Naive thymus-derived CD4-positive, alpha-beta T cell (primary cell): ENCODE measurements at regions of chr3 and their contacts with region 1.

Region 1: GRCh38 chr3:188389711-188390342 is 235.9 kb downstream of the LPP start:
- DNase-seq: peak in 7 of 9 donors; percentile 13 to 45 (median 34)
- ATAC-seq: peak; percentile 91
- H3K4me3 ChIP-seq: no peak overlapping the region
- H3K4me3 Mint-ChIP-seq: peak overlapping the region in 8 of 10 donors; percentile 5 to 70 (median 17)
- H3K27ac ChIP-seq: no peak overlapping the region
- H3K27ac Mint-ChIP-seq: peak overlapping the region in 8 of 9 donors; percentile 4 to 74 (median 60)
- H3K4me1 ChIP-seq: no peaks in the 10 kb centered on the region
- H3K4me1 Mint-ChIP-seq: peaks cover 18 to 32% (median 26%) of the 10 kb centered on the region in 7 donors
- H3K27me3 ChIP-seq: no peaks in the 10 kb centered on the region
- H3K27me3 Mint-ChIP-seq: no peaks in the 10 kb centered on the region

Region 2: DNA sequence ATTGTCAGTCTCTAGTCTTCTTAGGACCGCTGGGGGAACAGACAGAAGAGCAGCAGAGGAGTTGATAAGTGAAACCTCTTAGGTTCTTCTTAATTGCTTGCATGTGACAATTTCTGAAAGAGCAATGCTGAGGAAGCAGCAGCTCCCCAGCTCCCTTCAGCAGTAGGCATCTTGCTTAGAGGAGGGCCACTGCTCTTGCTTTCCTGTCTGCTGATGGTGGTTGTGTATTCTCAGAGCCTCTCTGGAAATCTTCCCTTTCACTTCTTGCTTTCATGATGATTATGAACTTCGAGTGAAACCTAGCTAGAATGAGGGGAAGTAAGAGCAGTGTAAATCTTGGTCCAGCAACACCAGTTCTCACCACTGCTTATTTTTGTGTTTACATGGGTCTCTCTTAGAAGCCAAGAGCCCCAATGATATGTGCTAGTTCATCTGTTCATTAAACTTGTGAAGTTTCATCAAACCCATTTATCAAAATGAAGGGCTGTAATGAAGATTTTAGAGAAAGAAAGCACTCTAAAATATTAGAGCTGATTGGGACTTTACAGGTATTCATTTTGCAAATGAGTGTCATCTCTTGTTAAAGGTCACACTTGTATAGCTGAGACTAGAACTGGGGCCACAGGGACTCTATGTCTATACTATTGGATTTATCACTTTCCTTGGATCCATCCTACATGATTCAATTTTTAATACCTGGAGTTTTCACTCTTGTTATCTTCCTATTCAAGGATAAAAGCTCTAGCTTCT is 10.8 kb after region 1 on chr3:
- CTCF ChIA-PET with region 1: no interaction called
- POLR2A ChIA-PET with region 1: no interaction called
- intact Hi-C with region 1: loop called in 1 of 2 experiments (anchors 1 kb)
- DNase-seq: no peak
- ATAC-seq: peak; percentile 75
- H3K4me3 ChIP-seq: no peak overlapping the region
- H3K4me3 Mint-ChIP-seq: peak overlapping the region in 1 of 10 donors; percentile 42
- H3K27ac ChIP-seq: no peak overlapping the region
- H3K27ac Mint-ChIP-seq: peak overlapping the region in 2 of 9 donors; percentile 58 to 69
- H3K4me1 ChIP-seq: peaks cover 0 to 4% of the 10 kb centered on the region in 2 donors
- H3K4me1 Mint-ChIP-seq: peaks cover 28 to 63% (median 49%) of the 10 kb centered on the region in 7 donors
- H3K27me3 ChIP-seq: no peaks in the 10 kb centered on the region
- H3K27me3 Mint-ChIP-seq: no peaks in the 10 kb centered on the region

Region 3: DNA sequence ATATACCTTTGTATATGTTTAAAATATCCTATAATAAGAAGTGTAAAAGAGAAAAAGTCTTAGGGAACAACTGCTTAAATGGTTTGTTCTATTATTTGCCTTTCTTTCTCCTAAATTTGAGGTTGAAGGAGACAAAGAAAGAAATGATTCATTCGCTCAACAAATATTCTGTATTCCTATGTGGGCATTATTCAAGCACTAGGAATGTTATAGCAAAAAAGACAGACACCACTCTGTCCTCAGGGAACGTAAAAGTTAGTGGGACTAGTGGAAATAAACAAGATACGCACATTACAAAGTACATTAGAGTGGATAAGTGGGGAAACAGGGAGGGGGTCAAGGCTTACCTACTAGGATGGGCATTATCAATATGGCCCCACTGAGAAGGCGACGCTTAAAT is 96.3 kb after region 1 on chr3:
- CTCF ChIA-PET with region 1: no interaction called
- POLR2A ChIA-PET with region 1: no interaction called
- intact Hi-C with region 1: no loop called
- DNase-seq: no peak
- ATAC-seq: no peak
- H3K4me3 ChIP-seq: no peak overlapping the region
- H3K4me3 Mint-ChIP-seq: no peak overlapping the region
- H3K27ac ChIP-seq: no peak overlapping the region
- H3K27ac Mint-ChIP-seq: peak overlapping the region in 1 of 9 donors; percentile 41
- H3K4me1 ChIP-seq: no peaks in the 10 kb centered on the region
- H3K4me1 Mint-ChIP-seq: peaks cover 0 to 6% (median 0%) of the 10 kb centered on the region in 7 donors
- H3K27me3 ChIP-seq: no peaks in the 10 kb centered on the region
- H3K27me3 Mint-ChIP-seq: no peaks in the 10 kb centered on the region